ENCODE measurements at regions of chr3 and their contacts with region 1.

Region 1: DNA sequence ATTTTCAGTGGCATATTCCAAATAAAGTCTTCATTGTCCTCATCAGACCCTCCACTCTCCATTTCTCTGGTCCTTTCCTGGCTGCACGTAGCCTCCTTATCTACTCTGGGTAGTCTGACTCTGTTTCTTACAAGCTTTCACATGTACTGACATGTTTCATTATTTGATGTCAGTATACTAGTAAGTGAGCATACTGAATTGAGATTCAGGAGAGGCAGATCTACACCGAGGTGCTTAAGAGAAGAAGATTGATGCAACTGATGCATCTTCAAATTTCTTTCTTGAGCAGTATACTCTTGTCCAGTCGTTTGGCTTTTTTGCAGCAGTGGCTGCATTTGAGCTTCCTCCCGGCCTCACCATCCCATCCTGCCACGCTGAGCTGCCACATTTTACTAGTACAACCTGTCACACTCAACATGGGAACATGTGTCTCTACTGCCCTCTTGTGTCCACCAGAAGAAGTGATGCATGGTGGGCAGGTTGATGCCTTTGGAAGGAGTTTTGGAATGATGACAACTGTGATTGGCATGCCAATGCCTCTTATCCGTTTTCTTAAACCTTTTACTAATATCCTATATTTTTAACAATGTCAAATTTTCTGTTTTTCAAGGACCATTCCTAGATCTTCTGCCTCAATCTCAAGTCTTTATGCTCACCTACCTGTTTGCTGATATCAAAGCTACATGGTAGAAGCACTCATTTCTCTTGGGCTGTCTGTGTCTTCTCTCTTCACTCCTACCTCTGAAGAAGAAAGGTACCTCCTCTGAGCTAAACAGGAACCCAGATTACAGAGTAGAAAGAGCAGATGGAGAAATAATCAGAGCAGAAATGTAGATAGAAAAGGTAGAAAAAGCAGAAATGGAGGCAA is 38.7 kb downstream of the GUCA1C start:
- DNase-seq: peak; percentile 13 to 82 (median 58)
- ATAC-seq: peak; percentile 96
- H3K4me3 ChIP-seq: no peak overlapping the region
- H3K4me3 Mint-ChIP-seq: no peak overlapping the region
- H3K27ac ChIP-seq: no peak overlapping the region
- H3K27ac Mint-ChIP-seq: no peak overlapping the region
- H3K4me1 ChIP-seq: no peaks in the 10 kb centered on the region
- H3K4me1 Mint-ChIP-seq: peaks cover 12% of the 10 kb centered on the region
- H3K27me3 ChIP-seq: no peaks in the 10 kb centered on the region
- H3K27me3 Mint-ChIP-seq: peaks cover 4% of the 10 kb centered on the region
- CTCF ChIP-seq: peak; percentile 89

Region 2: GRCh38 chr3:108552267-108553159 is 362.5 kb before region 1 on chr3:
- CTCF ChIA-PET with region 1: interaction called, 6 read pairs
- POLR2A ChIA-PET with region 1: no interaction called
- intact Hi-C with region 1: loop called in 1 of 2 experiments (anchors 2 kb)
- DNase-seq: peak in 2 of 9 experiments; percentile 59 to 65
- ATAC-seq: peak; percentile 52
- H3K4me3 ChIP-seq: no peak overlapping the region
- H3K4me3 Mint-ChIP-seq: no peak overlapping the region
- H3K27ac ChIP-seq: no peak overlapping the region
- H3K27ac Mint-ChIP-seq: no peak overlapping the region
- H3K4me1 ChIP-seq: no peaks in the 10 kb centered on the region
- H3K4me1 Mint-ChIP-seq: peaks cover 2% of the 10 kb centered on the region
- H3K27me3 ChIP-seq: no peaks in the 10 kb centered on the region
- H3K27me3 Mint-ChIP-seq: no peaks in the 10 kb centered on the region
- CTCF ChIP-seq: peak; percentile 58

Region 3: GRCh38 chr3:108662130-108662738 is 252.8 kb before region 1 on chr3:
- CTCF ChIA-PET with region 1: interaction called, 185 read pairs
- POLR2A ChIA-PET with region 1: no interaction called
- intact Hi-C with region 1: loop called (anchors 1 kb)
- DNase-seq: peak in 7 of 9 experiments; percentile 12 to 85 (median 33)
- ATAC-seq: peak; percentile 84
- H3K4me3 ChIP-seq: no peak overlapping the region
- H3K4me3 Mint-ChIP-seq: no peak overlapping the region
- H3K27ac ChIP-seq: no peak overlapping the region
- H3K27ac Mint-ChIP-seq: no peak overlapping the region
- H3K4me1 ChIP-seq: no peaks in the 10 kb centered on the region
- H3K4me1 Mint-ChIP-seq: peaks cover 10% of the 10 kb centered on the region
- H3K27me3 ChIP-seq: no peaks in the 10 kb centered on the region
- H3K27me3 Mint-ChIP-seq: no peaks in the 10 kb centered on the region
- CTCF ChIP-seq: peak; percentile 83

Region 4: GRCh38 chr3:108757404-108757982 is 157.5 kb before region 1 on chr3 and contains the start of gene RETNLB:
- CTCF ChIA-PET with region 1: interaction called, 6 read pairs
- POLR2A ChIA-PET with region 1: no interaction called
- intact Hi-C with region 1: loop called in 1 of 2 experiments (anchors 5 kb)
- DNase-seq: no peak
- ATAC-seq: no peak
- H3K4me3 ChIP-seq: no peak within 1 kb of the TSS
- H3K4me3 Mint-ChIP-seq: no peak within 1 kb of the TSS
- H3K27ac ChIP-seq: no peak within 1 kb of the TSS
- H3K27ac Mint-ChIP-seq: no peak within 1 kb of the TSS
- H3K4me1 ChIP-seq: no peaks in the 10 kb centered on the region
- H3K4me1 Mint-ChIP-seq: peaks cover 3% of the 10 kb centered on the region
- H3K27me3 ChIP-seq: no peaks in the 10 kb centered on the region
- H3K27me3 Mint-ChIP-seq: no peaks in the 10 kb centered on the region
- CTCF ChIP-seq: no peak
- total RNA-seq, gene RETNLB: not detected

Region 5: DNA sequence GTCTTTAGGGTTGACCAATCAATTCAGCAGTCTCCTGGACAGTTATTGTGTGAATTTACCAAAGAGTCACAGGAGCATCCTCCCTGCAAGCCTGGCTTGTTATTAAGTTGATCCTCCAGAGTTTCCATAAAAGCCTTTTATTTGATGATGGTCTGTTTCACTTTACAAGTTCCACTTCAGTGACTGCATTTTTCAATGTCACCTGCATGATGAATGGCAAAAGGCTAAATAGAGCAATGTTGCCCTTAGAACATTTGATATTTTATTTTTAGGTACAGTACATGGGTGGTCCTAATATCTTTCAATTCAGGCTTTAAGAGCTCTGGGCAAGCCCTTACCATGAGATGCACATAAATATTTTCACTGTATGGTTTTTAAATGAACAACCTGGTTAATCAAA is 16.0 kb after region 1 on chr3:
- CTCF ChIA-PET with region 1: interaction called, 23 read pairs
- POLR2A ChIA-PET with region 1: no interaction called
- intact Hi-C with region 1: no loop called
- DNase-seq: no peak
- ATAC-seq: no peak
- H3K4me3 ChIP-seq: no peak overlapping the region
- H3K4me3 Mint-ChIP-seq: no peak overlapping the region
- H3K27ac ChIP-seq: no peak overlapping the region
- H3K27ac Mint-ChIP-seq: no peak overlapping the region
- H3K4me1 ChIP-seq: no peaks in the 10 kb centered on the region
- H3K4me1 Mint-ChIP-seq: no peaks in the 10 kb centered on the region
- H3K27me3 ChIP-seq: no peaks in the 10 kb centered on the region
- H3K27me3 Mint-ChIP-seq: peaks cover 14% of the 10 kb centered on the region
- CTCF ChIP-seq: no peak

Region 6: DNA sequence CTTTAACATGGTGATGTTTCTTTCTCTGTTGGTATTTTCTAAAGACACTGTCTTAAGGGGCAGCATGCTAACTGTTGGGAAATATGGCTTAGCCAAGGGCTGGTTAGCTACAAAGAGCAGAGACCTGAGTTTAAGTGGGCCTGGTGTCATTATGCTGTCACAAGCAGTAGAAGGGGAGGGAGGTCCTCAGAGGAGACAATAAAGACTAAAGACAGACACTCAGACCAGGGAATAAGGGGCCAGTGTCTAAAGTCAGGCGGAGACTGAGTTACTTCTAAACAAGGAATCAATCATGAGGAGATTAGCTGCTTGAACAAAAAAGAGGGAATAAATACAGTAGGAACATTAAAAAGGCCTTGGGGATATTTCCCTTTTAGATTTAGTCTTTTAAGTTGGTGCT is 565.0 kb after region 1 on chr3:
- CTCF ChIA-PET with region 1: no interaction called
- POLR2A ChIA-PET with region 1: no interaction called
- intact Hi-C with region 1: no loop called
- DNase-seq: no peak
- ATAC-seq: no peak
- H3K4me3 ChIP-seq: no peak overlapping the region
- H3K4me3 Mint-ChIP-seq: no peak overlapping the region
- H3K27ac ChIP-seq: no peak overlapping the region
- H3K27ac Mint-ChIP-seq: no peak overlapping the region
- H3K4me1 ChIP-seq: no peaks in the 10 kb centered on the region
- H3K4me1 Mint-ChIP-seq: no peaks in the 10 kb centered on the region
- H3K27me3 ChIP-seq: no peaks in the 10 kb centered on the region
- H3K27me3 Mint-ChIP-seq: peaks cover 2% of the 10 kb centered on the region
- CTCF ChIP-seq: no peak